ENCODE measurements at regions of chr10 and their contacts with region 1.

Region 1: DNA sequence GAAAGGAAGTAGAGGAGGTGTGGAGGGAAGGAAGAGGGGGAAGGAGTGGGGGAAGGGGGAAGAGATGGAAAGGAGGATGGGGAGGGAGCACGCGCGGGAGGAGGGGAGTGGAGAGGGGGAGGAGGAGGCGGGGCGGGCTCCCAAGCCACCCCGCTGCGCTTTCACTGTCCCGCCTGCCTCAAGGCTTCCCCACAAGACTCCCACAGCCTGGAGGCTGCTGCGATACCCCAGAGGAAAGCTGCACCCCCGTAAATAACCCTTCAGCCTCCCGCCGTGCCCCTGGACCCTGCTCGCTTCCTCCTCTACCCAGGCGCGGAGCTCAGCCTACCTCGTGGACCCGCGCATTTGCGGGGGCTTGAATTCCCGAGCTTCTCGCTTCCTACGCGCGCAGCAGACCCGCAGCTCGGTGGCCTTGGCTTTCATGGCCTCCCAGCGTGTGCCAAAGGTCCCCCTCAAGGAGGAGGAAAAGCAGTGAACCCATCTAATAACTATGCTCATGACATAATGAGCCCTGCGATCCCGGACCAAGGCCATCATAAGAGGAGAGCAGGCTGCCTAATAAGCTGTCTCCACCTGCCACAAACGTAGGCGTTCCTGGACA is at the start of gene C10orf67:
- DNase-seq: peak in 8 of 14 experiments; percentile 12 to 62 (median 34)
- ATAC-seq: peak; percentile 53
- H3K4me3 ChIP-seq: peak within 1 kb of the TSS; percentile 73
- H3K4me3 Mint-ChIP-seq: peak within 1 kb of the TSS; percentile 92
- H3K27ac ChIP-seq: no peak within 1 kb of the TSS
- H3K27ac Mint-ChIP-seq: peak within 1 kb of the TSS; percentile 65
- H3K4me1 ChIP-seq: peaks cover 29% of the 10 kb centered on the region
- H3K4me1 Mint-ChIP-seq: peaks cover 38% of the 10 kb centered on the region
- H3K27me3 ChIP-seq: no peaks in the 10 kb centered on the region
- H3K27me3 Mint-ChIP-seq: peaks cover 7% of the 10 kb centered on the region
- CTCF ChIP-seq: no peak
- total RNA-seq, gene C10orf67: not detected

Region 2: DNA sequence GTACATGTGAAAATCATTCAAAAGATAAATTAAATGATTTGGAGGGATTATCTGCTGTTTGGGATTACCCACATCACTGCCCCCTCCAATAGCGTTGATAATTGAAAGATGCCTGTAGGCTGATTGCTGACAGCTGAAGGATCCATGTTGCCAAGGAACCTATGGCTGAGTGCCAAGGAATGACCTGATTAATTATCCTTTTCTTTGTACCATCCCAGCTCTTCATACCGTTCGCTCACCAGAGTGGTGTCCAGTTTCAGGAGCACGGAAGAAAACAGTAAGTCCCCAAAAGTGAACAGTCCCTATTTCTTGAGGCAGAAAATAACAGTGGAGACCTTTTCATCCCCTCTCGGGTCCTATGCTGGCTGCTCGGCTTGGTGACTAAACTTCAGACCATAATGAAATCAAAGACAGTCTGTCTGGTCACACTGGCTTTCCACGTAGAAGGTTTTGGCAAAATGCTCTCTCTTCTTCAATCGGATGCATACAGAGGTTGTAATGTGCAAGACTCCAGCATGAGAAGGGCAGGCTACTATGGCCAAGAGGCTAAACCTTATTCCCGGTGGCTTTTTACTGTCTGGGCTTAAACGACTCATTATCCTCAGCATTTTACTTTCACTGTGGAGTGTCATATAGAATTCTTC is 890.3 kb before region 1 on chr10:
- CTCF ChIA-PET with region 1: no interaction called
- POLR2A ChIA-PET with region 1: no interaction called
- intact Hi-C with region 1: no loop called
- DNase-seq: no peak
- ATAC-seq: no peak
- H3K4me3 ChIP-seq: no peak overlapping the region
- H3K4me3 Mint-ChIP-seq: no peak overlapping the region
- H3K27ac ChIP-seq: no peak overlapping the region
- H3K27ac Mint-ChIP-seq: no peak overlapping the region
- H3K4me1 ChIP-seq: peaks cover 2% of the 10 kb centered on the region
- H3K4me1 Mint-ChIP-seq: peaks cover 9% of the 10 kb centered on the region
- H3K27me3 ChIP-seq: peaks cover 0 to 4% of the 10 kb centered on the region in 2 experiments
- H3K27me3 Mint-ChIP-seq: peaks cover 14% of the 10 kb centered on the region
- CTCF ChIP-seq: no peak

Region 3: DNA sequence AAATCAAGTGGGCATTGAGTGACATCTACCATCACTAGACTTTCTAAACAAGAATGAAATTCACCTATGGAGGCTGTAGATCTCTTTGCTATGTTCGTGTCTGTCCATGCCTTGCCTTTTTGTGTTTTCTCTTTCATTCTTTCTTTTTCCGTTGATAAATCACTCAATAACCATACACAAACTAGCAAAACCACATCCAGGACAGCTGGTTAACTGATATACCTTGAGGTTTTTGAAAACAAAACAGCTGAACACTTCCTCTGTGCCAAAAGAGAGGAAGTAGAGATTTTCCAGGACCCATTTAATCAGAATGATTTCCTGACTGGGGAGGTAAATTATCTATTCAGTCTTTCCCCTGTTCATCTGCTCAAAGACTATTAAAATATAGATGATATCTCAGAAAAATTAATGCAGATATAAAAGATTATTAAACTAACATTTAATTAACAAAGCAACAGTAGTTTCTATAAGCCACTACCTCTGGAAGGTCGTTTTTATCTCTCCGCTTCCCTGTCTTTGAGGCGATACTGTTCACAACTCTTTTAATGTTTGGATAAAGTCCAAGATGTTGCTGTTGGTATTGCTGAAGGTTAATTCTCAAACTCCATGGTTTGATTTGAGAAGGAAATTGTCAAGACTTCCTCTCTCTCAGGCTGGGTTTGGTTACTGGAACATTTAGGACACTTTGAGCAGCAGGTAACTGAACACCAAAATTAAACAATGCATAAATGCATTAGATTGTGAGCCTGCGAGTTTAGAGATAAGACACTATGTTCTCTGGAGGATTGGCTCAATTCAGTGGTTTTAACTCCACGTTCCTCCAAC is 24.7 kb after region 1 on chr10:
- CTCF ChIA-PET with region 1: interaction called, 3 read pairs
- POLR2A ChIA-PET with region 1: interaction called, 5 read pairs
- intact Hi-C with region 1: loop called in 1 of 2 experiments (anchors 2 kb)
- DNase-seq: peak in 4 of 14 experiments; percentile 21 to 80 (median 38)
- ATAC-seq: peak; percentile 60
- H3K4me3 ChIP-seq: peak overlapping the region; percentile 10
- H3K4me3 Mint-ChIP-seq: peak overlapping the region; percentile 39
- H3K27ac ChIP-seq: peak overlapping the region in 1 of 2 donors; percentile 7
- H3K27ac Mint-ChIP-seq: peak overlapping the region; percentile 66
- H3K4me1 ChIP-seq: peaks cover 45% of the 10 kb centered on the region
- H3K4me1 Mint-ChIP-seq: peaks cover 50% of the 10 kb centered on the region
- H3K27me3 ChIP-seq: no peaks in the 10 kb centered on the region
- H3K27me3 Mint-ChIP-seq: no peaks in the 10 kb centered on the region
- CTCF ChIP-seq: no peak

Measured in CD4-positive, alpha-beta T cell (primary cell).